Activated T-helper 2 cell treated with anti-CD3 and anti-CD28 coated beads, Interferon-gamma antibody, Interleukin-2, Interleukin-4, amounts not matched to agents 10 μg/mL and 5 μg/mL and 100 μg/mL, durations not matched to agents 14 hours and 24 hours and 36 hours (primary cell): ENCODE measurements at regions of chr15 and their contacts with region 1.

Region 1: DNA sequence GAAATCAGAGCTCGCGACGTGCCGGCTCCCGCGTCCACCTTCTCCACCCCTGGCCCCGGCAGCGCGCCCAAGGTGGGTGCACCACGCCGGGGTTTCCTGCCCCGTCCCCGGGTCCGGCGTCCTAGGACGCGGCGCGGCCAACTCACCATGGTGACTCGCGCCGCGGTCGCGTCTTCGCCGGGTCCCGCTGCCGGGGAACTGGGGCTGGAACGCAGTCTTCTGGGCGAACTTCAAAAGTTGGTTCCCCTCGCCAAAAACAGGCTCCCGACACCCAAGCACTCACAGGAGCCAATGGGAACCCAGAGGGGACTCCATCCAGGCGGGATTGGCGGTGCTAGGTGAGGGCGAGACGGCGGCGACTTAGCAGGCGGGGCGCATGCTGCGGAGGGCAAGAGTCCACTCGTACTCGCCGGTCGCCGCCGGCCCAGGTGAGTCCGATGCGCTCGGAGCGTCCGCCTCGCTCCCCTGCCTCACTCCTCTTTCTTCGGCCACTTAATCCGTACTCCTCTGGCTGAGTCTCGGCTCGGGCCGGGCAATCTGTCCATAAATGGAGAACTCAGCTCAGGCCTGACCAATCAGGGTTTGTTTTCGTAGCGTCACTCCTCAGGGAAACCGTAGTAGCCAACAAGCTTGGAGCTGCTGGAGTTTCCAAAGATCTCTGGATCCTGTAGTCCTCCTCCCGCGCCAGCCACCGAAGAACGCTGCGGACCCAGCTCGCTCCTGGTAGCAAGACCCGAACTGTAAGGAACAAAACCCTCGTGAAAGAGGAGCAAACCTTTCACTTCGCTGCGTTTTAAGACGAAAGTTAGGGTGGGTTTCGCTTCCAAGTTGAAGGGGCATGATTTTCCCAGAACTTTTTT is at the start of gene MYO1E:
- DNase-seq: peak; percentile 23
- H3K4me3 Mint-ChIP-seq: peak within 1 kb of the TSS; percentile 93
- H3K27ac Mint-ChIP-seq: peak within 1 kb of the TSS; percentile 62
- H3K4me1 Mint-ChIP-seq: peaks cover 31% of the 10 kb centered on the region
- H3K27me3 Mint-ChIP-seq: peaks cover 37% of the 10 kb centered on the region
- total RNA-seq, gene MYO1E: 71.3 and 72.7 TPM in 2 replicates

Region 2: DNA sequence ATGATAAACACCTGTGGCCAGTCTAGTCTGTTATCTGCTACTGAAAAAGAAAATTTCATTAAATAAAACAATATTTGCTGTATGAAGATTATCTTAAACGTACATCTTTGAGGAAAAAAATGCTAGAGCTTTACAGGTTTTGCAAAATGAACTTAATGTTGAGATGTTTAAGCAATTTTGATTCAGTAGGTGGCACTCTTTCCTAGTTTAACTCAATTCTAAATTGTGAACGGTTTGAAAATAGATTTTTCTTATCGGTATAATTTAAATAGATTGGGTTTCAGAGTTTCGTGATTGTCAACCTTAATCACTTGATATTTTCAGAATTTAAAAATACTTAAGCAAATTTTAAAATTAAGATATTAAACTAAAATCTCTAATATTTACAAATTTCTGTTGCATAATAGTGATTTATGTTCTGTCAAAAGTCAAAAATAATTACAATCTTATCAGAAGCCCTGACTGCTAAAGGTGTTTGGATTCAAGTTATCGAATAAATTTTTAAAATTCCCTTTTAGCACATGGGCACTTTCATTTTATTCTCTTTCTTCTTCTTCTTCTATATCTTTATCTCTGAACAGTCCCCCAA is 392.1 kb before region 1 on chr15:
- intact Hi-C with region 1: no loop called
- DNase-seq: no peak
- H3K4me3 Mint-ChIP-seq: no peak overlapping the region
- H3K27ac Mint-ChIP-seq: peak overlapping the region; percentile 46
- H3K4me1 Mint-ChIP-seq: peaks cover 34% of the 10 kb centered on the region
- H3K27me3 Mint-ChIP-seq: peaks cover 10% of the 10 kb centered on the region

Region 3: GRCh38 chr15:59174835-59175831 is 197.4 kb before region 1 on chr15:
- intact Hi-C with region 1: loop called (anchors 5 kb)
- DNase-seq: peak; percentile 22
- H3K4me3 Mint-ChIP-seq: no peak overlapping the region
- H3K27ac Mint-ChIP-seq: no peak overlapping the region
- H3K4me1 Mint-ChIP-seq: peaks cover 16% of the 10 kb centered on the region
- H3K27me3 Mint-ChIP-seq: peaks cover 6% of the 10 kb centered on the region

Region 4: GRCh38 chr15:59255647-59256380 is 116.8 kb before region 1 on chr15:
- intact Hi-C with region 1: loop called (anchors 5 kb)
- DNase-seq: peak; percentile 58
- H3K4me3 Mint-ChIP-seq: peak overlapping the region; percentile 22
- H3K27ac Mint-ChIP-seq: peak overlapping the region; percentile 41
- H3K4me1 Mint-ChIP-seq: peaks cover 53% of the 10 kb centered on the region
- H3K27me3 Mint-ChIP-seq: peaks cover 1% of the 10 kb centered on the region

Region 5: DNA sequence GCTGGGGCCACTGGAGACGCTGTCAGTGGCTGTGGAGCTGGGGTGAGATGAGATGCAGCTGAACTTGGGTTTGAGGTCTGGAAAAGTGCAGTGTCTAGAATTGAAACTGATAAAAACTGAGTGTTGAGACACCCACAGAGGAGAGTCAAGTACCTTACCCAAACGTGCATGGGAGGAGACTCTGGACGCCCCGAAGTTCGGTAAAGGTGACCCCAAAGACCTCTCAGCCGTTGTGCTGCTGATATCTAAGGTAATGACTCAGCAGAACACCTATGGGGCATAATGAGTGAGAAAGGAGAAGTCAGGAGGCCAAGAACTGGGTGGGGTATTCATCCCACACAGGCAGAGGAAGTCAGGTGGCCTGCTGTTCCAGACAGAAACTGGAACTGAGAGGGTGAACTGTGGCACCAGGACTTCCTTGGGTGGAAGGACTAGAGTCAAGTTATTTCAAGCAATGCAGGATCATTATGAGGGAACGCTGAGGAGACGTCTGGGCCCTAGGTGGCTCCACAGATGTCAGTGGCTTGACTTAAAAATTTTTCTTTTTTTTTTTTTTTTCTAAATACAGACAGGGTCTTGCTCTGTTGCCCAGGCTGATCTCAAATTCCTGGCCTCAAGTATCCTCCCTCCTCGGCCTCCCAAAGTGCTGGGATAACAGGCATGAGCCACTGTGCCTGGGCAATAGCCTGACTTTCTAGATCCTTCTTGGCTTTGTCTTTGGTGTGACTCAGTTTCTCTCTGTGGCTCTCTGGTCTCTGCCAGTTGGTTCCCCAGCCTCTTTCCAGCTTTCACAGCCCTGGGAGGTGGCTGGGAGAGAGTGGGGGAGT is 171.4 kb after region 1 on chr15:
- intact Hi-C with region 1: no loop called
- DNase-seq: no peak
- H3K4me3 Mint-ChIP-seq: peak overlapping the region; percentile 48
- H3K27ac Mint-ChIP-seq: peak overlapping the region; percentile 20
- H3K4me1 Mint-ChIP-seq: peaks cover 9% of the 10 kb centered on the region
- H3K27me3 Mint-ChIP-seq: peaks cover 6% of the 10 kb centered on the region